Activated T-helper 1 cell treated with anti-CD3 and anti-CD28 coated beads, Interleukin-12 subunit alpha, Interleukin-12 subunit beta, Interleukin-2, Interleukin-4 antibody, amounts not matched to agents 30 ng/mL and 10 ng/mL and 1 ng/mL, durations not matched to agents 14 hours and 24 hours and 36 hours (primary cell): ENCODE measurements at regions of chr2 and their contacts with region 1.

Region 1: GRCh38 chr2:138430181-138430580 is 71.4 kb upstream of the SPOPL start:
- DNase-seq: no peak
- H3K4me3 Mint-ChIP-seq: no peak overlapping the region
- H3K27ac Mint-ChIP-seq: no peak overlapping the region
- H3K4me1 Mint-ChIP-seq: peaks cover 5% of the 10 kb centered on the region
- H3K27me3 Mint-ChIP-seq: no peaks in the 10 kb centered on the region

Region 2: GRCh38 chr2:138502284-138503086 is 72.3 kb after region 1 on chr2:
- intact Hi-C with region 1: loop called (anchors 1 kb)
- DNase-seq: no peak
- H3K4me3 Mint-ChIP-seq: peak overlapping the region; percentile 99
- H3K27ac Mint-ChIP-seq: peak overlapping the region; percentile 98
- H3K4me1 Mint-ChIP-seq: peaks cover 32% of the 10 kb centered on the region
- H3K27me3 Mint-ChIP-seq: peaks cover 2% of the 10 kb centered on the region

Region 3: GRCh38 chr2:138564586-138565241 is 134.5 kb after region 1 on chr2:
- intact Hi-C with region 1: no loop called
- DNase-seq: no peak
- H3K4me3 Mint-ChIP-seq: no peak overlapping the region
- H3K27ac Mint-ChIP-seq: no peak overlapping the region
- H3K4me1 Mint-ChIP-seq: no peaks in the 10 kb centered on the region
- H3K27me3 Mint-ChIP-seq: no peaks in the 10 kb centered on the region

Region 4: DNA sequence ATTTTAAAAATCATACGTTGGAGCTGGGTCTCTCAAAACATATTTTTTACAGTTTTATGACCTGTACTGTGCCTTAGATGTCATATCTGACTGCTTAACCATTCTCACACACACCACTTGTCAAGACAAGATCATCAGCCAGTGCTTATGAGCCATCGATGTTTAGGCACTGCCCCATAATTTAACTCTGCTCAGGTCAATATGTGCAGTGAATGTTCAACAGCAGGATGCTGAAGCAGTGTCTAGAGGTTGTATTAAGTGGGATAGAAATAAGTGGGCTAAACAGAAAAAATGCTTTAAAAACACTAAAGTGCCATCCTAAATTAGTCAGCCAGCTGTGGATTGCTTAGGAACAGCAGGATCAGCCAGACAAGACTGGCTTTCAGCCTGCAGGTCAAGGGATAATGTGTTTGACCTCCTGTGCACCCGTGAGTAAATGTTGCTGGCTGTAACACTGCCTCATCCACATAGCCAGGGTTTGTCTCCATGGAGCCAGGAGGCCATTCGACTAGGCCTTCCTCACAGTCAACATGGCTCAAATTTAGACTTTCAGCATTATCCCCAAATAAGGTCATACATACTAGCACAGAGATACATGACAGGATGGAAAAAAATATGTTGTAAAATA is 489.1 kb after region 1 on chr2:
- intact Hi-C with region 1: no loop called
- DNase-seq: no peak
- H3K4me3 Mint-ChIP-seq: no peak overlapping the region
- H3K27ac Mint-ChIP-seq: no peak overlapping the region
- H3K4me1 Mint-ChIP-seq: no peaks in the 10 kb centered on the region
- H3K27me3 Mint-ChIP-seq: no peaks in the 10 kb centered on the region